Ascending aorta (tissue), 2 donors: ENCODE measurements at regions of chr17 and their contacts with region 1.

Region 1: DNA sequence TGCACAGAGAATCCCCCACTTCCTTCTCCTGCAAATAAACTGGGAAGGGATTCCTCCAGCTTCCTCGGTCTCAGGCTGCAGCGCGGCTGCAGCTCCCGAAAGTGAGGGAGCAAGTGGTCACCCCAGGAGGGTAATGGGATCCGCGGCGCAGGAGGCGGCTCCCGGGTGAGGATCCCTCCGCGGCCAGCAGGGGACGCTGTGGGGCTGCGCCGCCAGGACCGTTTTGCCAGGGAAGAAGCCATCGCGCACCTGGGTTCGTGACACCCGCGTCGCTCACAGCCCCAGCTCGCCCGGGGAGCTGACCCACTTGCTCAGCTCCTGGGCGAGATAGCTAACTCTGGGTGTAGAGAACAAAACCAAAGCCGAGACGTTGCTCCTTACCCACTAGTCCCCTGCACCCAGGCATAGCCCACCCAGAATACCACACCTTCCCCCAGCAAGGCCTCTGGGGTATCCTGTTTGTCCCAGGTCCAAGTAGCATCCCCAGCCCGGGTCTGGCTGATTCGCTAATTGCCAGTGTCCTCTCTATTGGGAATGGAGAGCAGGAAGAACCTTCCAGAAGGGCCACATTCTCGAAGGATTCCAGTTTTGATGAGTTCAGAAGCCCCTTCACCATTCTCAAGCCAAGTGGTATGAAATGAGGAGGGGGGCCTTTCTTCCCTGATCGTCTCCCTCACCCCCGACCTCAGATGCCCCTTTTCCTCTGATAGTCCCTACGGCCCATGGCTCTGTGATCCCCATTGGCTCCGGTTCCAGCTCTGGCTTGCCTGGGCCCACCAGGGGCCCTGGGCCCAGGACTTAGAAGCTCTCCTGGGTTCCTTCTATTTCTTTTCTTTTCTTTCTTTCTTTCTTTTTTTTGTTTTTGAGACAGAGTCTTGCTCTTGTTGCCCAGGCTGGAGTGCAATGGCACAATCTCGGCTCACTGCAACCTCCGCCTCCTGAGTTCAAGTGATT is 14.1 kb downstream of the CYGB start:
- DNase-seq: peak in 1 of 2 donors; percentile 84
- H3K4me3 ChIP-seq: no peak overlapping the region
- H3K27ac ChIP-seq: no peak overlapping the region
- H3K4me1 ChIP-seq: peaks cover 3 to 7% of the 10 kb centered on the region in 2 donors
- H3K27me3 ChIP-seq: no peaks in the 10 kb centered on the region
- CTCF ChIP-seq: peak; percentile 99 to 100 (median 100)

Region 2: GRCh38 chr17:76547184-76547641 is 23.9 kb after region 1 on chr17:
- intact Hi-C with region 1: loop called (anchors 1 kb)
- DNase-seq: peak in 1 of 2 donors; percentile 74
- H3K4me3 ChIP-seq: no peak overlapping the region
- H3K27ac ChIP-seq: no peak overlapping the region
- H3K4me1 ChIP-seq: no peaks in the 10 kb centered on the region
- H3K27me3 ChIP-seq: peaks cover 3% of the 10 kb centered on the region
- CTCF ChIP-seq: peak; percentile 46 to 74 (median 63)

Region 3: GRCh38 chr17:76585818-76586593 is 62.6 kb after region 1 on chr17 and contains the start of gene ST6GALNAC2:
- intact Hi-C with region 1: loop called (anchors 2 kb)
- DNase-seq: peak in 1 of 2 donors; percentile 70
- H3K4me3 ChIP-seq: peak within 1 kb of the TSS; percentile 51 to 67
- H3K27ac ChIP-seq: no peak within 1 kb of the TSS
- H3K4me1 ChIP-seq: peaks cover 0 to 20% of the 10 kb centered on the region in 2 donors
- H3K27me3 ChIP-seq: no peaks in the 10 kb centered on the region
- CTCF ChIP-seq: peak; percentile 24 to 41 (median 26)
- total RNA-seq, gene ST6GALNAC2: 15.8 TPM

Region 4: DNA sequence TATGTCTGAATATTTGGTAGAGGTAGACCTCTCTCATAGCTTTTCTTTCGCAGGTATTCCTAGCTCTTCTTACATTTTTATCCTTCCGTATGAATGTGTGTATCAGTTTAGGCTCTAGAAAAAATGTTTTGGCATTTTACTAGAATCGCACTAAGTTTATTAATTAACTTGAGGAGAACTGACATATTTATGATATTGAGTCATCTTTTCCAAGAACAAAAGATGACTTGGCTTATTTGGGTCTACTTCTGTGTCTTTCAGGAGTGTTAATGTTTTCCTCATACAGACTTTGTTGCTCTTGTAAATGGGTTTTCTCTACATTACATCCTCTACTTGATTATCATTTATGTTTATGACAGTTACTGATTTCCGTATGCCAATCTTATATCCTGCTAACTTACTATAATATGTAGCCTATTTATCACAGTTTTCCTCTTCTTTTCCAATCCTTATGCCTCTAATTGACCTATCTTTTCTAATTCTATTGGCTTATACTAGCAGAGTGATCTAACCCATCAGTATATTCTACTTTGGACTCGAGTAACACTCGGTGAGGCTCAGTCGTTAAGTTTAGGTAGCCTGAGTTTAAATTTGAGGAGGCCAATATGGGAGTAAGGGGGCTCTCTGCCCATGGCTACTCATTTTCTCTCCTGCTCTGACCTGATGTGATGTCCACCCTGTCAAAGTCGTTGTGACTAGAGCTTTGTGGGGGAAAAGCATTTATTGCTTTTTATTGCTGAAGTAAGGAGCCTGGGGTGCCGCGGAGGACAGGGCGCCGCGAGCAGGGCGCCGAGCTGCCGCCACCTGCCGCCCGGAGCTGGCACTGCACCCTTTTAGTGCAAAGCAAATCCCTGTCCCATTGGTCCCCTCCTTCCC is 100.1 kb after region 1 on chr17:
- intact Hi-C with region 1: loop called (anchors 1 kb)
- DNase-seq: peak in 1 of 2 donors; percentile 81
- H3K4me3 ChIP-seq: no peak overlapping the region
- H3K27ac ChIP-seq: no peak overlapping the region
- H3K4me1 ChIP-seq: no peaks in the 10 kb centered on the region
- H3K27me3 ChIP-seq: no peaks in the 10 kb centered on the region
- CTCF ChIP-seq: peak; percentile 76 to 97 (median 92)